Gastrocnemius medialis (tissue), 4 donors: ENCODE measurements at regions of chr1 and their contacts with region 1.

Region 1: GRCh38 chr1:149962123-149962548 is 25.5 kb upstream of the MTMR11 start:
- DNase-seq: peak; percentile 16 to 56
- ATAC-seq: peak; percentile 84 to 96
- H3K4me3 ChIP-seq: no peak overlapping the region
- H3K27ac ChIP-seq: peak overlapping the region; percentile 6 to 30 (median 26)
- H3K4me1 ChIP-seq: peaks cover 0 to 5% of the 10 kb centered on the region in 2 donors
- H3K27me3 ChIP-seq: no peaks in the 10 kb centered on the region
- CTCF ChIP-seq: peak; percentile 70 to 80 (median 74)
- POLR2A ChIP-seq: no peak

Region 2: GRCh38 chr1:149917571-149918144 is 44.5 kb before region 1 on chr1 and contains the start of gene SV2A:
- in situ Hi-C with region 1: no loop called
- intact Hi-C with region 1: no loop called
- DNase-seq: no peak
- ATAC-seq: no peak
- H3K4me3 ChIP-seq: peak within 1 kb of the TSS in 3 of 4 donors; percentile 33 to 44 (median 36)
- H3K27ac ChIP-seq: no peak within 1 kb of the TSS
- H3K4me1 ChIP-seq: no peaks in the 10 kb centered on the region
- H3K27me3 ChIP-seq: peaks cover 11 to 19% (median 13%) of the 10 kb centered on the region in 3 donors
- CTCF ChIP-seq: no peak
- POLR2A ChIP-seq: no peak
- total RNA-seq, gene SV2A: 0.12 to 0.56 (median 0.30) TPM

Region 3: GRCh38 chr1:149942207-149942606 is 19.9 kb before region 1 on chr1:
- in situ Hi-C with region 1: no loop called
- intact Hi-C with region 1: no loop called
- DNase-seq: no peak
- ATAC-seq: no peak
- H3K4me3 ChIP-seq: no peak overlapping the region
- H3K27ac ChIP-seq: peak overlapping the region in 2 of 4 donors; percentile 31 to 95
- H3K4me1 ChIP-seq: peaks cover 24 to 25% of the 10 kb centered on the region in 2 donors
- H3K27me3 ChIP-seq: no peaks in the 10 kb centered on the region
- CTCF ChIP-seq: no peak
- POLR2A ChIP-seq: no peak

Region 4: DNA sequence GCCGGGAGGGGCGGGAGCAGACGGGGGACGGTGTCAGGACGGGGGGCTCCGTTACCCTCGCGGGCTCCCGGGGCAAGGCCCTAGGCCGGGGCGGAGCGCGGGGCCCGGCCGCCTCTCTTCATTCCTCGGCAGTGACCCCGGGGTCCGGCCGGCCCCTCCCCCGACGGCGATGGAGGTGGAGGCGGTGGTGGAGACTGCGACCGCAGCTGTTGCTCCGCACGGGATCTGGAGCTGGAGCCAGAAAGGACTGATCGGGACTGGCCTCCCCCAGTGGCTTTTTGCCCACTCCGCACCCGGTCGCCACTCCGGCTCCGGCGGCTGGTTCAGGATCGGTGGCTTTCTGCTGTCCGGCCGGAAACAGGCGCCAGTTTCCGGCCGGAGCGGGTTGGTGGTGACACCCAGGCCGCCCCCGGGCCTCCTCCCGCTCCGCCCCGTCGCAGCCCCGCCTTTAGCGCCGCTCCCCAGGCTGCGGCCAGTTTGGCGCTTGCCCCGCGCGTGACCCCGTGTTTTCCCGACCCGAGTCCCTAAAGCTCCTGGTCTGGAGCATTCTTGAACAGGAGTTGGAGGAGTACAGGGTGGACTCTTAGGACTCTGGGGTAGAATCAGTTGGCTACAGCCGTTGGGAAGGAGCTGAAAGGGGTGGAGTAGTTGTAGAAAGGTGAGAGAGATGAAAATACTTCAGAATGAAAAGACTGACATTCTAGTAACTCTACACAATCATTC is 48.4 kb after region 1 on chr1 and contains the start of gene OTUD7B:
- in situ Hi-C with region 1: no loop called
- intact Hi-C with region 1: loop called (anchors 5 kb)
- DNase-seq: peak; percentile 88 to 91
- ATAC-seq: peak; percentile 81 to 83
- H3K4me3 ChIP-seq: peak within 1 kb of the TSS; percentile 78 to 99 (median 88)
- H3K27ac ChIP-seq: peak within 1 kb of the TSS; percentile 93 to 100 (median 96)
- H3K4me1 ChIP-seq: peaks cover 34 to 43% of the 10 kb centered on the region in 2 donors
- H3K27me3 ChIP-seq: no peaks in the 10 kb centered on the region
- CTCF ChIP-seq: peak in 3 of 5 experiments; percentile 11 to 27 (median 25)
- POLR2A ChIP-seq: peak; percentile 88 to 90
- total RNA-seq, gene OTUD7B: 27.2 to 51.3 (median 43.6) TPM

Region 5: GRCh38 chr1:150053926-150054325 is 91.8 kb after region 1 on chr1:
- in situ Hi-C with region 1: loop called (anchors 5 kb)
- intact Hi-C with region 1: loop called (anchors 1 kb)
- DNase-seq: no peak
- ATAC-seq: no peak
- H3K4me3 ChIP-seq: no peak overlapping the region
- H3K27ac ChIP-seq: no peak overlapping the region
- H3K4me1 ChIP-seq: peaks cover 0 to 10% of the 10 kb centered on the region in 2 donors
- H3K27me3 ChIP-seq: no peaks in the 10 kb centered on the region
- CTCF ChIP-seq: no peak
- POLR2A ChIP-seq: no peak

Region 6: DNA sequence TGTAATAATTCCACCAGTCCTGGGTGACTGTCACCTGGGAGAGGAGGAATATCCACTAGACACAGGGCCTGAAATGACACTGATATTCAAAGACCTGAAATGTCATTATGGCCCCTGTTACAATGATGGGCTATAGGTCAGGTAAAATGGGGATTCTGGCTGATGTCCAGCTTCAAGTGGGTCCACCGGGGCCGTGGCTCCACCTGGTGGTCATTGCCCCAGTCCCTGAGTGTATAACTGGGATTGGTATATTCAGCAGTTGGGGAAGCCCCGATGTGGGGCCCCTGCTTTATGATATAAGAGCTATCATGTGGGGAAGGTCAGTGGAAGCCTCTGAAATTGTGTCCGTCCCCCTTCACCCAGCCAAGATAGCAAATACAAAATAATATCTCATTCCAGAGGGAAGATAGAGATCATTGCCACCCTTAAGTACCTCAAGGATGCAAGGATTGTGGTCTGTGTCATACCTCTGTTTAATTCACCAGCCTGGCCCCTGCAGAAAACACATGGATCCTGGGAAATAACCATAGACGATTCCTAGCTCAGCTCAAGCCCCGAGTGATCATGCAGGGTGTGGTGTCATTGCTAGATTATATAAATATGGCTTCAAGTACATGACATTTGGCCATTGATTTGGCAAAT is 206.9 kb after region 1 on chr1:
- in situ Hi-C with region 1: loop called in 1 of 4 experiments (anchors 5 kb)
- intact Hi-C with region 1: loop called (anchors 2 kb)
- DNase-seq: peak; percentile 36 to 61
- ATAC-seq: peak; percentile 60 to 62
- H3K4me3 ChIP-seq: no peak overlapping the region
- H3K27ac ChIP-seq: no peak overlapping the region
- H3K4me1 ChIP-seq: peaks cover 0 to under 1% of the 10 kb centered on the region in 2 donors
- H3K27me3 ChIP-seq: no peaks in the 10 kb centered on the region
- CTCF ChIP-seq: peak; percentile 73 to 86 (median 84)
- POLR2A ChIP-seq: no peak

Region 7: DNA sequence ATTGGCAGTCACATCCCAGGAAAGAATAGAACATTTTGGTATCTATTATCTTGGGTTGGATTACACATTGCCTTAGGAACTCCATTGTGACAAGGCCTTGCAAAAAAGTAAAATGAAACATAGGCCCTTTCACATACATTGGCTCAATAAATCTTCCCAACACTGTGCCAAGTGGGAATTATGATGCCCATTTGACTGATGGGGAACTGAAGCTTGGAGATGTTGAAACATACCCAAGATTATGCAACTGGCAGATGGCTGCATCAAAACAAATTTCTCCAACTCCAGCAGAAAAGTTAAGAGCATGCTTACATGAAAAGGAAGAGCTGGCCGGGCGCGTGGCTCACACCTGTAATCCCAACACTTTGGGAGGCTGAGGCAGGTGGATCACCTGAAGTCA is 214.5 kb after region 1 on chr1:
- in situ Hi-C with region 1: loop called (anchors 5 to 25 kb)
- intact Hi-C with region 1: no loop called
- DNase-seq: no peak
- ATAC-seq: no peak
- H3K4me3 ChIP-seq: no peak overlapping the region
- H3K27ac ChIP-seq: no peak overlapping the region
- H3K4me1 ChIP-seq: no peaks in the 10 kb centered on the region
- H3K27me3 ChIP-seq: no peaks in the 10 kb centered on the region
- CTCF ChIP-seq: no peak
- POLR2A ChIP-seq: no peak

Region 8: DNA sequence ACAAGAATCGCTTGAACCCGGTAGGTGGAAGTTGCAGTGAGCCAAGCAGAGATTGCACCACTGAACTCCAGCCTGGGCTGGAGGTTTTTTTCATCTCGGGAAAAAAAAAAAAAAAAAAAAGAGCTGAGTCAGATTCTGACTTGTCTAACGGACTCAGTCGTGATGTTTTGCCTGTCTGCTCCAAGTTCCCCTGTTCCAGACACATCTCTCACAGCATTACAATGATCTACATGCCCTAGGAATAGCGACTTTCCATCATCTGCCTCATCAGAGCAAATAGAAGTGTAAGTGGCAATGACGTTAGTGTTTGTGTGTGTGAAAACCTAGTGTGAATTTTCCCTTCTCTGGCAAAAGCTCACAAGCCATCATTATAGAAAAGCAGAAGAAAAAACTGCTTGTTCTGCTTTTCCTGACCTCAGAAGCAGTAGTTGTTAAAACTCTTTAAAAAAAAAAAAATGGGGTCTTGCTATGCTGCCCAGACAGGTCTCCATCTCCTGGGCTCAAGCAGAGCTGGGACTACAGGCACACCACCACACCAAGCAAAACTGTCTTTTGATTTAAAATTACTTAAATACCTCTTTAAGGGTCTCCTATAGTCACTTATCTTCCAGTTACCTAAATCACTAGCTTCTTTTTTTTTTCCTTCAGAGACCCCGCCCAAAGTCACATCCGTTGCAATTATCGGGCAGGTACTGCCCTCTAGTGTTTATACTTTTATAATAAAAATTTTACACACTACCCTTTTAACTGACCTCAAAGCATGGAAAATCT is 224.8 kb after region 1 on chr1:
- in situ Hi-C with region 1: loop called in 3 of 4 experiments (anchors 5 to 25 kb)
- intact Hi-C with region 1: no loop called
- DNase-seq: no peak
- ATAC-seq: peak; percentile 66 to 73
- H3K4me3 ChIP-seq: no peak overlapping the region
- H3K27ac ChIP-seq: no peak overlapping the region
- H3K4me1 ChIP-seq: peaks cover 2% of the 10 kb centered on the region in 2 donors
- H3K27me3 ChIP-seq: no peaks in the 10 kb centered on the region
- CTCF ChIP-seq: peak; percentile 26 to 53 (median 31)
- POLR2A ChIP-seq: no peak